Right ventricle myocardium inferior (tissue), 1 donor: ENCODE measurements at regions of chr2 and their contacts with region 1.

Region 1: DNA sequence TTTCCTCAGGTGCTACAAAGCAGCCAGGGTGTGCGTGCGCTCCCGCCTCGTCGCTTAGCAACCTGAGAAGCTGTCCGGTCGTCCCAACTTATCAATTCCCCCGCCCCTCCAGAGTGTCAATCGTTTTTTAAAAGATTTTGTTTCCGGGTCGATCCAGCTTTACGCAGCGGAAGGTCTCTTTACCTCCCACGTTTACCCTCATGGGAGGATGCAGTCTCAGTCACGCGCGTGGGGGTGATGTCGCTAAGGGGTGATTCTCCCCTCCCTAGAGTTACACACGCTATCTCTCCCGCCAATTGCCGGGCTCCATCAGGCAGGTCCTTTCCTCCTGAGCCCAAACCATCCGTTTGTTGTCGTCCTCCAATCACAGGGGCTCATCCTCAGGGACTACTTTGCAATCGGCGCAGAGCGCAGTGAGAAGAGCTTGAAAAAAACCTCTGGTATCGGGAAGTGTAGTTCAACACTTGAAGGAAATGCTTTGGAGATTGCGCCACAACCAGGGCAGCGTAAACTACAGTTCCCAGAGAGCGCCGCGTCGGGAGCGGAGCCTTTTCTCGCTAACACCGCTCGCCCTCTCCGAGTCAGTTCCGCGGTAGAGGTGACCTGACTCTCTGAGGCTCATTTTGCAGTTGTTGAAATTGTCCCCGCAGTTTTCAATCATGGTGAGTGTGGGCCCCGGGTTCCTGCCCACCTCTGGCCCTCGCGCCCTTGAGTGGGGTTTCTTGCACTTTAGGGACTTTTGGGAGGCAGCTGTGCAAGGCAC is at the starts of genes MDH1 and WDPCP:
- DNase-seq: peak; percentile 95
- ATAC-seq: peak; percentile 96
- total RNA-seq, gene MDH1: 1,383 TPM
- total RNA-seq, gene WDPCP: 13.5 TPM

Region 2: DNA sequence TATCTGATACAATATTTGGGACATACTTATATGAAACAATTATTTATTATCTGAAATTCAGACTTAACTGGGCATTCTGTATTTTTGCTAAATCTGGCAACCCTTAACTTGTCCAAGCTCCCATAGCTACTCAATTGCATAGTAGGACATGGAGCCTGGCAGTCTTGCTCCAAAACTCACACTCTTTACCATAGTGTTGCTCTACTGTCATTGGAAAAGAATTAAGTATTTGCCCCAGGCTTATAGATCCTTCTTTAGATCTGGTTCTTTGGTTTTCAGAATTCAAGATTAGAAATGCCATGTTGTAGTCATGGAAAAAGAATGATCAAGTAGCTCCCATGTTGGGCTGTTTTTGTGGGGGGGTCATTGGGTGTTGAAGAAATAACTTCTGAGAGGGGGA is 241.2 kb before region 1 on chr2:
- intact Hi-C with region 1: no loop called
- DNase-seq: no peak
- ATAC-seq: no peak

Region 3: DNA sequence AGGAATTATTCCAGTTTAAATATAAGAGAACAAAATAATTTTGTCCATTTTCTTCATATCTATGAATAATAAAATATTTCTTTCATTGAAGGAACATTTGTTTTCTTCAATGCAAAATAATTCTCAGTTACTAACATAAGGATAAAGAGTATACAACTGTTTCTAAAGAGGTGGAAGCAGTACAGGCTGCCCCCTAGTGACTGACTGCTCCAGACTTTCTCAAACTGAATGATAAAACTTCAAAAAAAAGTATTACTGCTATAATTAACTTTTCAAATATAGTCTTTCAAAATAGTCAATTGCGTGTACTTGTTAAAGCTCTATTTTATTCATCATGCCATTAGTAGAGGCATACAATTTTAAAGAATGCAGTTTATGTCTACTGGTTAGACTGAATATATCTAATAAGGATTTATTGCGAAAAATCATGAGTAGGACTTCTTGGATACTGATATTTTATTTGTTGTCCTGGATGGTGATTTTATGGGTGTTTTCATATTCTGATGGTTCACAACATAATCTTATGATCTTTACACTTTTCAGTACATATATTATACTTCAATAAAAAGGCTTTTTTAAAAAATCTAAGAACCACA is 100.3 kb before region 1 on chr2:
- intact Hi-C with region 1: loop called (anchors 10 kb)
- DNase-seq: no peak
- ATAC-seq: no peak

Region 4: GRCh38 chr2:63500398-63500797 is 88.2 kb before region 1 on chr2:
- intact Hi-C with region 1: no loop called
- DNase-seq: no peak
- ATAC-seq: no peak

Region 5: GRCh38 chr2:63514781-63515180 is 73.8 kb before region 1 on chr2:
- intact Hi-C with region 1: no loop called
- DNase-seq: no peak
- ATAC-seq: no peak

Region 6: GRCh38 chr2:63544017-63544627 is 44.4 kb before region 1 on chr2:
- intact Hi-C with region 1: loop called (anchors 2 kb)
- DNase-seq: no peak
- ATAC-seq: no peak

Region 7: DNA sequence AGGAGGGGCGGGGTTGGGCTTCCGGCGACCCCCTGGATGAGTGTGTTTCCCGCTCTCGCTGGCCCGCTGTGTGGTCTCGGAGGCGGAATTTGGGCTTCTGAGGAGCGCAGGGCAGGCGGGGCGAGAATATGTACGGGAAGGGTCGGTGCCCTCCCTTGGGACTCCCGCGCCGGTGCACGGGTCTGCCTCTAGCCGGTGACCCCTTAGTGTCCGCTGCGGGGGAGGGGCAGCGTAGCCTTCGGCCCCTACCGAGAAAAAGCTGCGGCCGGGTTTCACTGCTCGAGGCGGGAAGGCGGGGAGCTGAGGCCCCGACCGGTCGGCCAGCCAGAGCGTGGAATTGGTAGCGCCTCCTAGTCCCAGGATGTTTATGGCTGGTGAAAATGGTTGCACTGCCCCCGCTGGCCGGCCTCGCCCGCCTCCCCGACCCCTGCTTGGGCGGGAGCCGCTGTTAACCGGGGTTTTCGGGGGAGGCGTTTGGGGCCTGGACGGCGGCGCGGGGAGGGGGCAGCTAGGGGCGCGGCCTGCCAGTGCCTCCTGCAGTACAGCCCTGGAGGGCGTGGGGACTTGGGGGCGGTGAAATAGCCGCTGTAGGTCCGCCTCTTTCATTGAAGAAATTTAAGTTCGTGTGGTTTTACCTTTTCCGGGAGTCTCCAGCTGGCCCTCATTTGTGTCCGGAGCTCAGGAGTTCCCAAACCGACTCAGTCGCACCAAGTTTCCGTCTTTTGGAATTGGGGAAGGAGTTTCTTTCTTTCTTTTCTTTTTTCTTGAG is 252.9 kb after region 1 on chr2 and contains the start of gene UGP2:
- intact Hi-C with region 1: loop called (anchors 5 kb)
- DNase-seq: peak; percentile 95
- ATAC-seq: peak; percentile 92
- total RNA-seq, gene UGP2: 363 TPM

Region 8: DNA sequence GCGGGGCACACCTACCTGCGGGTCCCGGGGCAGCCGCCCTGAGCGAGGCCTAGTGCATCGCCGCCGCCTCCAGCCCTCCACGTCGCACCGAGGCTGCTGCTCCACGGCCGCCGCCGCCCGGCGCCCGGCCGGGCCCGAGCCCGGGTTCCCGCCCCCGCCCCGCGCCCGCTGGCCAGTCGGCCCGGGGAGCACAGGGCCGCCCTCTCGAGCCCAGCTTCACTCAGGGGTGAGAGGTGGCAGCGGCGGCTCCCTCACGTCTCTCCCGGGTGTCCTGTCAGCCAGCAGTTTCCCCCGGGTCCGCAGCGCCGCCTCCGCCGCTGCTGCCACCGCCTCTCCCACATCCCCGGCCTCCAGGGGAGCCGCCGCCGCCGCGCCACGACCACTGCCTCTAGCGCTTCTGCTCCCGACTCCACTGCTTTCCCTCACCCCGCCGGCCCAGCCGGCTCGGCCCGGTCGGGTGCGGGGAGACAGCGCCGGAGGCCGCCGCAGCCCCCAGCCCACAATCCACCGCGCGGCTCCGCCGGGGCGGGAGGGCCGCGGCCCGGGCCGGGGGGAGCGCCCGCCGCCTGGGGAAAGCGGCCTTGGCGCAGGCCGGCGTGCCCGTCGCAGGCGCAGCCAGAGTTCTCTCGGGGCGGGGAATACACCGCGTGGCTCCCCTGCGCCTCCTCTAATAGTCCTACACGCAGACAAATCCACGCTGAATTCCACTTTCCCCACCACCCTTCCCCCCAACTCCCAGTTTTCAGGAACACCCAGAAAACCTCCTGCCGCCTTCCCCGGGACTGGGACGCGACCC is 430.6 kb after region 1 on chr2 and contains the start of gene VPS54:
- intact Hi-C with region 1: loop called (anchors 10 kb)
- DNase-seq: peak; percentile 86
- ATAC-seq: peak; percentile 90
- total RNA-seq, gene VPS54: 10.0 TPM